CD4-positive, alpha-beta T cell (primary cell): ENCODE measurements at regions of chr6 and their contacts with region 1.

Region 1: GRCh38 chr6:24991810-24992467 is 56.2 kb upstream of the RIPOR2 start:
- DNase-seq: peak; percentile 52 to 90 (median 71)
- ATAC-seq: peak; percentile 86
- H3K4me3 ChIP-seq: no peak overlapping the region
- H3K4me3 Mint-ChIP-seq: peak overlapping the region; percentile 46
- H3K27ac ChIP-seq: peak overlapping the region; percentile 31 to 66
- H3K27ac Mint-ChIP-seq: peak overlapping the region; percentile 84
- H3K4me1 ChIP-seq: peaks cover 36% of the 10 kb centered on the region
- H3K4me1 Mint-ChIP-seq: peaks cover 83% of the 10 kb centered on the region
- H3K27me3 ChIP-seq: no peaks in the 10 kb centered on the region
- H3K27me3 Mint-ChIP-seq: no peaks in the 10 kb centered on the region
- CTCF ChIP-seq: peak; percentile 85

Region 2: GRCh38 chr6:24848461-24848860 is 143.5 kb before region 1 on chr6:
- CTCF ChIA-PET with region 1: interaction called, 6 read pairs
- POLR2A ChIA-PET with region 1: interaction called, 4 read pairs
- intact Hi-C with region 1: loop called in 1 of 2 experiments (anchors 2 kb)
- DNase-seq: no peak
- ATAC-seq: no peak
- H3K4me3 ChIP-seq: no peak overlapping the region
- H3K4me3 Mint-ChIP-seq: no peak overlapping the region
- H3K27ac ChIP-seq: no peak overlapping the region
- H3K27ac Mint-ChIP-seq: peak overlapping the region; percentile 87
- H3K4me1 ChIP-seq: peaks cover 26% of the 10 kb centered on the region
- H3K4me1 Mint-ChIP-seq: peaks cover 60% of the 10 kb centered on the region
- H3K27me3 ChIP-seq: no peaks in the 10 kb centered on the region
- H3K27me3 Mint-ChIP-seq: no peaks in the 10 kb centered on the region
- CTCF ChIP-seq: no peak

Region 3: DNA sequence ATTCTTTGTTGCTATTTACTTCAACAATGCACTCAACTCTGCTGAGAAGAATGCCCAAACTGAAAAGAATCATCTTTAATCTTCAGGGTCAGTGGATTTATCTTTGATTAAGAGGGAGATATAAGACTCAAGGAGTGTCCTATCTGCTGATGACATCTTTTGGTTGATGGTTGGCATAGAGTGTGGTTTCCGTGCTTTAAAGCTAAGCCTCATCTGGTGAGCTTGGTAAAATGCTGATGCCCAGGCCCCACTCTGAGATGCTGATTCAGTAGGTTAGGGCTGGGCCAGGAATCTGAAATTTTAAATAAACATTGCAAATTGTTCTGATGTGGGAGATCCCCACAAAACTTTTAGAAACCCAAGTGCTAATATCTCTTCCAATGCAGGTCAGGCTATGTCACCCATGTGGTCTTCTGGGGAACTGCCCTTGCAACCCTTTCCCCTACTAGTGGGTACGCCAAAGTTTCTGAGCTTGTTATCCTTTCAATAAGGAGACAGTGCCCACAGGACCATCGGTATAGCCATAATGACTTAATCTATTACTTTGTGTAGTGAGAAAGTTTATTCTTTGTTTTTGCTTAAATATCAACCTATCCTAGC is 124.7 kb before region 1 on chr6:
- CTCF ChIA-PET with region 1: interaction called, 10 read pairs
- POLR2A ChIA-PET with region 1: interaction called, 11 read pairs
- intact Hi-C with region 1: no loop called
- DNase-seq: peak in 2 of 14 experiments; percentile 34 to 36
- ATAC-seq: no peak
- H3K4me3 ChIP-seq: no peak overlapping the region
- H3K4me3 Mint-ChIP-seq: peak overlapping the region; percentile 46
- H3K27ac ChIP-seq: peak overlapping the region; percentile 28 to 33
- H3K27ac Mint-ChIP-seq: peak overlapping the region; percentile 93
- H3K4me1 ChIP-seq: peaks cover 59% of the 10 kb centered on the region
- H3K4me1 Mint-ChIP-seq: peaks cover 79% of the 10 kb centered on the region
- H3K27me3 ChIP-seq: no peaks in the 10 kb centered on the region
- H3K27me3 Mint-ChIP-seq: no peaks in the 10 kb centered on the region
- CTCF ChIP-seq: peak; percentile 19

Region 4: GRCh38 chr6:24910961-24911712 is 80.8 kb before region 1 on chr6:
- CTCF ChIA-PET with region 1: interaction called, 33 read pairs
- POLR2A ChIA-PET with region 1: interaction called, 95 read pairs
- intact Hi-C with region 1: loop called in 1 of 2 experiments (anchors 5 kb)
- DNase-seq: peak in 13 of 14 experiments; percentile 27 to 79 (median 58)
- ATAC-seq: peak; percentile 46
- H3K4me3 ChIP-seq: peak overlapping the region; percentile 65
- H3K4me3 Mint-ChIP-seq: peak overlapping the region; percentile 95
- H3K27ac ChIP-seq: peak overlapping the region; percentile 73 to 88
- H3K27ac Mint-ChIP-seq: peak overlapping the region; percentile 97
- H3K4me1 ChIP-seq: peaks cover 93% of the 10 kb centered on the region
- H3K4me1 Mint-ChIP-seq: peaks cover 99% of the 10 kb centered on the region
- H3K27me3 ChIP-seq: no peaks in the 10 kb centered on the region
- H3K27me3 Mint-ChIP-seq: no peaks in the 10 kb centered on the region
- CTCF ChIP-seq: no peak

Region 5: DNA sequence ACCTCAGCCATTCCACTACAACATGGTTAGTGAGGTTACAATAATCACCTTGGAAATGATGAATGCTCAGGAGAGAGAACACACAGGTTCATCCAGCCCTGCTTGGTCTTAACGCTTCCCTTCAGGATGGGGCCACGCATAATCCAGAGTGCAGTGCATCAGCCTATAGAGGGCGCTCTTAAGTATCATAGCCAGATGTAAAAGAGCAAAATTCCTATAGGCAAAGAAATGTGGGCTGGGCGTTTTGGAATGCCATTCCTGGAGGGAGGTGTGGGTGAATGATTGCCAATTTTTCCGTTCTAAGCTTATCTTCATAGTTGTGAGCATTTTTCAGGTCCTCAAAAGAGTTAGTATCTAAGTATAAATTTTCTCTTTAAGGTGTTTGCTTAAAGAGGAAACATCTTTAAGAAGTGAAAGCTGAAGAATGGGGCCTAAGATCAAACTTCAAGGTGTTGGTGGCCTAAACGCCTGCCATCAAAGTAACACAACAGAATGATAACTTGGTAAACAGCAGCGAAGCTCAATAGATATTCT is 58.0 kb before region 1 on chr6:
- CTCF ChIA-PET with region 1: interaction called, 180 read pairs
- POLR2A ChIA-PET with region 1: interaction called, 395 read pairs
- intact Hi-C with region 1: loop called (anchors 1 to 2 kb)
- DNase-seq: peak in 10 of 14 experiments; percentile 30 to 82 (median 50)
- ATAC-seq: peak; percentile 21
- H3K4me3 ChIP-seq: peak overlapping the region; percentile 89
- H3K4me3 Mint-ChIP-seq: peak overlapping the region; percentile 97
- H3K27ac ChIP-seq: peak overlapping the region; percentile 71 to 89
- H3K27ac Mint-ChIP-seq: peak overlapping the region; percentile 97
- H3K4me1 ChIP-seq: peaks cover 38% of the 10 kb centered on the region
- H3K4me1 Mint-ChIP-seq: peaks cover 62% of the 10 kb centered on the region
- H3K27me3 ChIP-seq: no peaks in the 10 kb centered on the region
- H3K27me3 Mint-ChIP-seq: no peaks in the 10 kb centered on the region
- CTCF ChIP-seq: peak; percentile 97

Region 6: GRCh38 chr6:24966381-24966780 is 25.6 kb before region 1 on chr6:
- CTCF ChIA-PET with region 1: interaction called, 45 read pairs
- POLR2A ChIA-PET with region 1: interaction called, 32 read pairs
- intact Hi-C with region 1: no loop called
- DNase-seq: no peak
- ATAC-seq: no peak
- H3K4me3 ChIP-seq: no peak overlapping the region
- H3K4me3 Mint-ChIP-seq: no peak overlapping the region
- H3K27ac ChIP-seq: no peak overlapping the region
- H3K27ac Mint-ChIP-seq: no peak overlapping the region
- H3K4me1 ChIP-seq: peaks cover 69% of the 10 kb centered on the region
- H3K4me1 Mint-ChIP-seq: peaks cover 93% of the 10 kb centered on the region
- H3K27me3 ChIP-seq: no peaks in the 10 kb centered on the region
- H3K27me3 Mint-ChIP-seq: no peaks in the 10 kb centered on the region
- CTCF ChIP-seq: no peak

Region 7: DNA sequence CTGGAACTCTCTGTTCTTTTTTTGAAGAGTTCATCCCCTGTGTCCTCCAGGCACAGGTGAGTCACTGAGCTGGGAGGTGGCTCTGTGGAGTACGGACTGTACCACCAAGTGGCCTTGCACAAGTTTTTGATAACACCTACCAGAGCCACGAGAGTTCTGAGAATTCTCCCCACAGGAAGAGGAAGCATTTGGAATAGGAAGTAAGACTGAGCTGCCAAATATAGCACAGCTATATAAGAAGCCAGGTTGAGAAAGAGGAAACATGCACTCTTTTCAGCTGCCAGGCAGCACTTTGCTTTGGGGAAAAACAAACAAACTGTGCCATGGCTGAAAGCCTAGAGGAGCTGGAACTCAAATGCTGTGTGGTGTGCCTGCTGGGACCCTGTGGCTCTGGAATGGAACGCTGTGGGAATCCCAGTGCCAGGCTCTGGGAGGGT is 14.6 kb after region 1 on chr6:
- CTCF ChIA-PET with region 1: interaction called, 57 read pairs
- POLR2A ChIA-PET with region 1: interaction called, 15 read pairs
- intact Hi-C with region 1: loop called in 1 of 2 experiments (anchors 2 kb)
- DNase-seq: peak in 6 of 14 experiments; percentile 24 to 89 (median 54)
- ATAC-seq: peak; percentile 66
- H3K4me3 ChIP-seq: peak overlapping the region; percentile 3
- H3K4me3 Mint-ChIP-seq: peak overlapping the region; percentile 69
- H3K27ac ChIP-seq: peak overlapping the region; percentile 73 to 89
- H3K27ac Mint-ChIP-seq: peak overlapping the region; percentile 74
- H3K4me1 ChIP-seq: peaks cover 49% of the 10 kb centered on the region
- H3K4me1 Mint-ChIP-seq: peaks cover 80% of the 10 kb centered on the region
- H3K27me3 ChIP-seq: no peaks in the 10 kb centered on the region
- H3K27me3 Mint-ChIP-seq: no peaks in the 10 kb centered on the region
- CTCF ChIP-seq: no peak

Region 8: GRCh38 chr6:25085756-25086155 is 93.8 kb after region 1 on chr6:
- CTCF ChIA-PET with region 1: no interaction called
- POLR2A ChIA-PET with region 1: no interaction called
- intact Hi-C with region 1: no loop called
- DNase-seq: peak in 4 of 14 experiments; percentile 19 to 52 (median 26)
- ATAC-seq: peak; percentile 58
- H3K4me3 ChIP-seq: no peak overlapping the region
- H3K4me3 Mint-ChIP-seq: peak overlapping the region; percentile 36
- H3K27ac ChIP-seq: no peak overlapping the region
- H3K27ac Mint-ChIP-seq: peak overlapping the region; percentile 33
- H3K4me1 ChIP-seq: peaks cover 18% of the 10 kb centered on the region
- H3K4me1 Mint-ChIP-seq: peaks cover 10% of the 10 kb centered on the region
- H3K27me3 ChIP-seq: no peaks in the 10 kb centered on the region
- H3K27me3 Mint-ChIP-seq: no peaks in the 10 kb centered on the region
- CTCF ChIP-seq: no peak